CD4-positive, alpha-beta memory T cell (primary cell): ENCODE measurements at regions of chr17 and their contacts with region 1.

Region 1: GRCh38 chr17:46035112-46035818 is 36.2 kb downstream of the STH start:
- DNase-seq: peak in 3 of 5 donors; percentile 13 to 57 (median 24)
- H3K4me3 ChIP-seq: no peak overlapping the region
- H3K4me3 Mint-ChIP-seq: no peak overlapping the region
- H3K27ac ChIP-seq: no peak overlapping the region
- H3K27ac Mint-ChIP-seq: peak overlapping the region; percentile 3 to 80 (median 58)
- H3K4me1 ChIP-seq: peaks cover 7% of the 10 kb centered on the region
- H3K4me1 Mint-ChIP-seq: peaks cover 11 to 19% (median 12%) of the 10 kb centered on the region in 4 donors
- H3K27me3 ChIP-seq: no peaks in the 10 kb centered on the region
- H3K27me3 Mint-ChIP-seq: no peaks in the 10 kb centered on the region

Region 2: DNA sequence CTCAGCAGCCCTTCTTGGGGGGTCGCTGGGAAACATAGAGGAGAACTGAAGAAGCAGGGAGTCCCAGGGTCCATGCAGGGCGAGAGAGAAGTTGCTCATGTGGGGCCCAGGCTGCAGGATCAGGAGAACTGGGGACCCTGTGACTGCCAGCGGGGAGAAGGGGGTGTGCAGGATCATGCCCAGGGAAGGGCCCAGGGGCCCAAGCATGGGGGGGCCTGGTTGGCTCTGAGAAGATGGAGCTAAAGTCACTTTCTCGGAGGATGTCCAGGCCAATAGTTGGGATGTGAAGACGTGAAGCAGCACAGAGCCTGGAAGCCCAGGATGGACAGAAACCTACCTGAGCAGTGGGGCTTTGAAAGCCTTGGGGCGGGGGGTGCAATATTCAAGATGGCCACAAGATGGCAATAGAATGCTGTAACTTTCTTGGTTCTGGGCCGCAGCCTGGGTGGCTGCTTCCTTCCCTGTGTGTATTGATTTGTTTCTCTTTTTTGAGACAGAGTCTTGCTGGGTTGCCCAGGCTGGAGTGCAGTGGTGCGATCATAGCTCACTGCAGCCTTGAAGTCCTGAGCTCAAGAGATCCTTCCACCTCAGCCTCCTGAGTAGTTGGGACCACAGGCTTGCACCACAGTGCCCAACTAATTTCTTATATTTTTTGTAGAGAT is 32.8 kb before region 1 on chr17:
- CTCF ChIA-PET with region 1: interaction called, 12 read pairs
- POLR2A ChIA-PET with region 1: no interaction called
- intact Hi-C with region 1: no loop called
- DNase-seq: peak; percentile 67 to 78 (median 72)
- H3K4me3 ChIP-seq: no peak overlapping the region
- H3K4me3 Mint-ChIP-seq: no peak overlapping the region
- H3K27ac ChIP-seq: no peak overlapping the region
- H3K27ac Mint-ChIP-seq: no peak overlapping the region
- H3K4me1 ChIP-seq: peaks cover 5% of the 10 kb centered on the region
- H3K4me1 Mint-ChIP-seq: no peaks in the 10 kb centered on the region
- H3K27me3 ChIP-seq: no peaks in the 10 kb centered on the region
- H3K27me3 Mint-ChIP-seq: peaks cover 0 to 2% of the 10 kb centered on the region in 2 donors

Region 3: DNA sequence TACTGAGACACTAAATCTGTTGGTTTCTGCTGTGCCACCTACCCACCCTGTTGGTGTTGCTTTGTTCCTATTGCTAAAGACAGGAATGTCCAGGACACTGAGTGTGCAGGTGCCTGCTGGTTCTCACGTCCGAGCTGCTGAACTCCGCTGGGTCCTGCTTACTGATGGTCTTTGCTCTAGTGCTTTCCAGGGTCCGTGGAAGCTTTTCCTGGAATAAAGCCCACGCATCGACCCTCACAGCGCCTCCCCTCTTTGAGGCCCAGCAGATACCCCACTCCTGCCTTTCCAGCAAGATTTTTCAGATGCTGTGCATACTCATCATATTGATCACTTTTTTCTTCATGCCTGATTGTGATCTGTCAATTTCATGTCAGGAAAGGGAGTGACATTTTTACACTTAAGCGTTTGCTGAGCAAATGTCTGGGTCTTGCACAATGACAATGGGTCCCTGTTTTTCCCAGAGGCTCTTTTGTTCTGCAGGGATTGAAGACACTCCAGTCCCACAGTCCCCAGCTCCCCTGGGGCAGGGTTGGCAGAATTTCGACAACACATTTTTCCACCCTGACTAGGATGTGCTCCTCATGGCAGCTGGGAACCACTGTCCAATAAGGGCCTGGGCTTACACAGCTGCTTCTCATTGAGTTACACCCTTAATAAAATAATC is 21.6 kb before region 1 on chr17:
- CTCF ChIA-PET with region 1: no interaction called
- POLR2A ChIA-PET with region 1: no interaction called
- intact Hi-C with region 1: no loop called
- DNase-seq: no peak
- H3K4me3 ChIP-seq: no peak overlapping the region
- H3K4me3 Mint-ChIP-seq: no peak overlapping the region
- H3K27ac ChIP-seq: no peak overlapping the region
- H3K27ac Mint-ChIP-seq: peak overlapping the region in 1 of 7 donors; percentile 43
- H3K4me1 ChIP-seq: peaks cover 9% of the 10 kb centered on the region
- H3K4me1 Mint-ChIP-seq: peaks cover 3 to 6% (median 5%) of the 10 kb centered on the region in 4 donors
- H3K27me3 ChIP-seq: no peaks in the 10 kb centered on the region
- H3K27me3 Mint-ChIP-seq: no peaks in the 10 kb centered on the region